Psoas muscle (tissue), 8 donors: ENCODE measurements at regions of chr12 and their contacts with region 1.

Region 1: DNA sequence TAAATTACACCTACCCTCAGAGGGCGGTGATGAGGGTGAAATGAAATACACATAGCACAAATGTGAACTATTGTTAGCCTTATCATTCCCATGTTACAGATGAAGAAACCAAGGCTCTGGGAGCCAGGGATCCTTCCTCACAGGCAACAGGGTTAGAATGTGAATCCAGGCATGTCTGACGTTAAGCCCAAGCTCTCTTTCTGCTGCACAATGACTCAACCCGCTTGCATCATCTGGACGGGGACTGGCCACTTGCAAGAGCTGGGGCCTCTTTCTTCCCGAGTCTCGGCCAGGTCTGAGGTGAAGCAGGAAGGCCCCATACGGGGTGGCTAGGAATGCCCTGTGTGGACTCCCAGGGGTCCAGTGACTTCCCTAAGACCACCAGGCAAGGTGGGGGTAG is 105.2 kb downstream of the RBM19 start:
- DNase-seq: no peak
- ATAC-seq: peak; percentile 30 to 61 (median 48)
- H3K4me3 ChIP-seq: no peak overlapping the region
- H3K27ac ChIP-seq: no peak overlapping the region
- H3K4me1 ChIP-seq: no peaks in the 10 kb centered on the region
- H3K27me3 ChIP-seq: no peaks in the 10 kb centered on the region
- CTCF ChIP-seq: no peak

Region 2: GRCh38 chr12:113462117-113462774 is 398.7 kb before region 1 on chr12:
- intact Hi-C with region 1: loop called in 1 of 2 experiments (anchors 2 kb)
- DNase-seq: peak; percentile 81 to 86
- ATAC-seq: peak; percentile 69 to 83 (median 80)
- H3K4me3 ChIP-seq: peak overlapping the region; percentile 41
- H3K27ac ChIP-seq: no peak overlapping the region
- H3K4me1 ChIP-seq: peaks cover 17% of the 10 kb centered on the region
- H3K27me3 ChIP-seq: peaks cover 2 to 86% (median 33%) of the 10 kb centered on the region in 3 donors
- CTCF ChIP-seq: peak; percentile 72

Region 3: GRCh38 chr12:113678223-113679119 is 182.5 kb before region 1 on chr12:
- intact Hi-C with region 1: no loop called
- DNase-seq: no peak
- ATAC-seq: no peak
- H3K4me3 ChIP-seq: no peak overlapping the region
- H3K27ac ChIP-seq: no peak overlapping the region
- H3K4me1 ChIP-seq: no peaks in the 10 kb centered on the region
- H3K27me3 ChIP-seq: peaks cover 0 to 13% (median 8%) of the 10 kb centered on the region in 3 donors
- CTCF ChIP-seq: no peak

Region 4: GRCh38 chr12:113899561-113900471 is 38.9 kb after region 1 on chr12:
- intact Hi-C with region 1: no loop called
- DNase-seq: no peak
- ATAC-seq: peak in 1 of 4 donors; percentile 29
- H3K4me3 ChIP-seq: no peak overlapping the region
- H3K27ac ChIP-seq: no peak overlapping the region
- H3K4me1 ChIP-seq: no peaks in the 10 kb centered on the region
- H3K27me3 ChIP-seq: no peaks in the 10 kb centered on the region
- CTCF ChIP-seq: no peak

Region 5: DNA sequence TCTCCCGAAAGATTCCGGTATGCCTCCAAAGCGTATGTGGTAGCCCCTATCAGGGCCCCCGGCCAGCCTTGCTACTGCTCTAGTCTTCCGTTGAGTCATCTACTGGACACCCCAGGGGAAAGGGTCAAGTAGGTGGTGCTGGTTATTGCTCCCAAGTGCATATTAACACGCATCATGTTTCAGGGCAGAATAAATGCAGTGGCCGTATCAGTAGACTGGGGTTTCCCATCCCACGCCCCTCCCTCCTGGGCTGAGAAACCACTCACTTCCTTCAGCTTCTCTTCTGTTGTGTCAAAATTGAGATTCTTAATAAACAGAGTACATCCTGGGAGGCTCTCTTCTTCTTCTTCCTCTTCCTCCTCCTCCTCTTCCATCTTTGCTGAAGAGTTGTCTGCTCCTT is 65.8 kb after region 1 on chr12:
- intact Hi-C with region 1: no loop called
- DNase-seq: no peak
- ATAC-seq: no peak
- H3K4me3 ChIP-seq: no peak overlapping the region
- H3K27ac ChIP-seq: no peak overlapping the region
- H3K4me1 ChIP-seq: no peaks in the 10 kb centered on the region
- H3K27me3 ChIP-seq: no peaks in the 10 kb centered on the region
- CTCF ChIP-seq: no peak